ENCODE measurements at regions of chr1 and their contacts with region 1.

Region 1: GRCh38 chr1:156096640-156097391 is 14.6 kb upstream of the MEX3A start:
- DNase-seq: peak; percentile 65
- ATAC-seq: peak; percentile 97
- H3K4me3 ChIP-seq: no peak overlapping the region
- H3K27ac ChIP-seq: no peak overlapping the region
- H3K4me1 ChIP-seq: peaks cover 69% of the 10 kb centered on the region
- H3K27me3 ChIP-seq: no peaks in the 10 kb centered on the region
- CTCF ChIP-seq: peak; percentile 99
- EP300 ChIP-seq: 0 out of 4 replicates have a peak, but pooled peaks of 1 of the 2 experiments have one; percentile 44
- POLR2A ChIP-seq: no peak
- RAD21 ChIP-seq: peak; percentile 98

Region 2: GRCh38 chr1:156033011-156033410 is 63.8 kb before region 1 on chr1:
- CTCF ChIA-PET with region 1: no interaction called
- POLR2A ChIA-PET with region 1: no interaction called
- in situ Hi-C with region 1: no loop called
- intact Hi-C with region 1: no loop called
- DNase-seq: no peak
- ATAC-seq: no peak
- H3K4me3 ChIP-seq: no peak overlapping the region
- H3K27ac ChIP-seq: no peak overlapping the region
- H3K4me1 ChIP-seq: no peaks in the 10 kb centered on the region
- H3K27me3 ChIP-seq: no peaks in the 10 kb centered on the region
- CTCF ChIP-seq: no peak
- EP300 ChIP-seq: no peak
- POLR2A ChIP-seq: no peak
- RAD21 ChIP-seq: no peak

Region 3: DNA sequence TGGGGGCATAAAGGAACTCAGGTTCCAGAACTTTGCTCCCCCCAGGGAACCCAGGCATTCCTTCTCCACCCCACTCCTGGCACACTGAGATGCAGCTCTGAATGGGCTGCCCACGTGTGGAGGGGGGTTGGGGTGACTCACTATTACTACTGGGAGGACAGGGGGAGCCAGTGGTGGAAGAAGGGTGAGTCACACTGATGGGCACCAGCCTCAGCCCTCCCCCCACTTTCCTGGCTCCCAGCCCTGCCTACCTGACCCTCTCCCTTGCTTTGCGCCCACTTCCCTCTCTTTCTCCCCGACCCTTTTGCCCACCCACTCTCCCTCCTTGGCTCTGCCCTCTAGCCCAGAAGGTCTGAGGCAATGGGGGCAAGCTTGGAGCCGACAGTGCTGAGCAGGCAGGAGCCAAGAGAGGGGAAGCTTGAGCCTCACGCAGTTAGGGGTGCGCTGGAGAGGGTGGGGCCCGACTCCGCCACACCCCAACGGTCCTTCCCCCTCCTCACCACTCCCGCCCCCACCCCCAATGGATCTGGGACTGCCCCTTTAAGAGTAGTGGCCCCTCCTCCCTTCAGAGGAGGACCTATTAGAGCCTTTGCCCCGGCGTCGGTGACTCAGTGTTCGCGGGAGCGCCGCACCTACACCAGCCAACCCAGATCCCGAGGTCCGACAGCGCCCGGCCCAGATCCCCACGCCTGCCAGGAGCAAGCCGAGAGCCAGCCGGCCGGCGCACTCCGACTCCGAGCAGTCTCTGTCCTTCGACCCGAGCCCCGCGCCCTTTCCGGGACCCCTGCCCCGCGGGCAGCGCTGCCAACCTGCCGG is 17.5 kb after region 1 on chr1 and contains the start of gene LMNA:
- CTCF ChIA-PET with region 1: no interaction called
- POLR2A ChIA-PET with region 1: interaction called, 14 read pairs
- in situ Hi-C with region 1: no loop called
- intact Hi-C with region 1: no loop called
- DNase-seq: peak; percentile 75
- ATAC-seq: peak; percentile 81
- H3K4me3 ChIP-seq: peak within 1 kb of the TSS; percentile 78 to 92 (median 83)
- H3K27ac ChIP-seq: peak within 1 kb of the TSS; percentile 81
- H3K4me1 ChIP-seq: peaks cover 68% of the 10 kb centered on the region
- H3K27me3 ChIP-seq: no peaks in the 10 kb centered on the region; a peak in 1 of 5 replicates
- CTCF ChIP-seq: 0 out of 2 replicates have a peak, but pooled peaks have one; percentile 17
- EP300 ChIP-seq: no peak
- POLR2A ChIP-seq: peak in 1 of 2 experiments; percentile 90; a peak in 2 of 4 replicates
- RAD21 ChIP-seq: no peak
- total RNA-seq, gene LMNA: 190 and 225 TPM in 2 replicates

Region 4: GRCh38 chr1:156123356-156124196 is 26.8 kb after region 1 on chr1:
- CTCF ChIA-PET with region 1: interaction called, 92 read pairs
- POLR2A ChIA-PET with region 1: interaction called, 113 read pairs
- in situ Hi-C with region 1: no loop called
- intact Hi-C with region 1: no loop called
- DNase-seq: peak; percentile 93
- ATAC-seq: peak; percentile 82
- H3K4me3 ChIP-seq: peak overlapping the region in 2 of 3 experiments; percentile 32 to 66; a peak in 4 of 6 replicates
- H3K27ac ChIP-seq: peak overlapping the region; percentile 96
- H3K4me1 ChIP-seq: peaks cover 100% of the 10 kb centered on the region
- H3K27me3 ChIP-seq: no peaks in the 10 kb centered on the region
- CTCF ChIP-seq: peak; percentile 43
- EP300 ChIP-seq: no peak; a peak in 1 of 4 replicates
- POLR2A ChIP-seq: peak in 1 of 2 experiments; percentile 84; a peak in 2 of 4 replicates
- RAD21 ChIP-seq: no peak